ENCODE measurements at regions of chr2 and their contacts with region 1.

Region 1: GRCh38 chr2:20097879-20098714 is 46.7 kb upstream of the LAPTM4A start:
- DNase-seq: peak; percentile 88
- ATAC-seq: peak; percentile 97
- H3K4me3 Mint-ChIP-seq: no peak overlapping the region
- H3K27ac Mint-ChIP-seq: no peak overlapping the region
- H3K4me1 Mint-ChIP-seq: no peaks in the 10 kb centered on the region
- H3K27me3 Mint-ChIP-seq: peaks cover 15% of the 10 kb centered on the region

Region 2: DNA sequence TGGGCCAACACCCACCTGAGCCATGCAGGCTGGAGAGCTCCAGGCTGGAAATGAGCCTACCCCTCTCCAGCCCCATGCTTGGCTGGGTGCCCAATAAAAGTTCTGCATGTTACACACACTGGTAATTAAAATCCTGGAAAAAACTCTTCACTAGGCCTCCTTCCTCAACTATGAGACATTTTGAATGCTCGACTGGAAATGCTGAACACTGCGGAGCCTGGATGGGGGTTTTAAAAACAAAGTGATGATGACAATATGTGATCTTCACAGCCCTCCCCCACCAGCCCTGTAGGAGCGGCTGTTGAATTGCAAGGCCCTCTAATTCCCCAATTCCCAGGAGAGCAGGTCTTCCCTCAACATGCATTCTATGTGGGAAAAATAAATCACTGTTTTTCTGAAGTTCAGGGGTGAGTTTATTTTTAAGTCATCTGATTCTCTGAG is 375.5 kb before region 1 on chr2:
- CTCF ChIA-PET with region 1: no interaction called
- POLR2A ChIA-PET with region 1: no interaction called
- intact Hi-C with region 1: no loop called
- DNase-seq: no peak
- ATAC-seq: no peak
- H3K4me3 Mint-ChIP-seq: no peak overlapping the region
- H3K27ac Mint-ChIP-seq: no peak overlapping the region
- H3K4me1 Mint-ChIP-seq: no peaks in the 10 kb centered on the region
- H3K27me3 Mint-ChIP-seq: no peaks in the 10 kb centered on the region

Region 3: GRCh38 chr2:19955544-19956422 is 142.3 kb before region 1 on chr2:
- CTCF ChIA-PET with region 1: interaction called, 10 read pairs
- POLR2A ChIA-PET with region 1: no interaction called
- intact Hi-C with region 1: loop called (anchors 1 kb)
- DNase-seq: peak; percentile 67
- ATAC-seq: peak; percentile 87
- H3K4me3 Mint-ChIP-seq: no peak overlapping the region
- H3K27ac Mint-ChIP-seq: no peak overlapping the region
- H3K4me1 Mint-ChIP-seq: no peaks in the 10 kb centered on the region
- H3K27me3 Mint-ChIP-seq: no peaks in the 10 kb centered on the region

Region 4: GRCh38 chr2:19989681-19990415 is 108.2 kb before region 1 on chr2 and contains the start of gene WDR35:
- CTCF ChIA-PET with region 1: interaction called, 3 read pairs
- POLR2A ChIA-PET with region 1: no interaction called
- intact Hi-C with region 1: loop called in 1 of 2 experiments (anchors 1 kb)
- DNase-seq: peak; percentile 95
- ATAC-seq: peak; percentile 97
- H3K4me3 Mint-ChIP-seq: peak within 1 kb of the TSS; percentile 90
- H3K27ac Mint-ChIP-seq: peak within 1 kb of the TSS; percentile 75
- H3K4me1 Mint-ChIP-seq: peaks cover 28% of the 10 kb centered on the region
- H3K27me3 Mint-ChIP-seq: peaks cover 12% of the 10 kb centered on the region
- total RNA-seq, gene WDR35: 6.2 to 7.4 TPM

Region 5: DNA sequence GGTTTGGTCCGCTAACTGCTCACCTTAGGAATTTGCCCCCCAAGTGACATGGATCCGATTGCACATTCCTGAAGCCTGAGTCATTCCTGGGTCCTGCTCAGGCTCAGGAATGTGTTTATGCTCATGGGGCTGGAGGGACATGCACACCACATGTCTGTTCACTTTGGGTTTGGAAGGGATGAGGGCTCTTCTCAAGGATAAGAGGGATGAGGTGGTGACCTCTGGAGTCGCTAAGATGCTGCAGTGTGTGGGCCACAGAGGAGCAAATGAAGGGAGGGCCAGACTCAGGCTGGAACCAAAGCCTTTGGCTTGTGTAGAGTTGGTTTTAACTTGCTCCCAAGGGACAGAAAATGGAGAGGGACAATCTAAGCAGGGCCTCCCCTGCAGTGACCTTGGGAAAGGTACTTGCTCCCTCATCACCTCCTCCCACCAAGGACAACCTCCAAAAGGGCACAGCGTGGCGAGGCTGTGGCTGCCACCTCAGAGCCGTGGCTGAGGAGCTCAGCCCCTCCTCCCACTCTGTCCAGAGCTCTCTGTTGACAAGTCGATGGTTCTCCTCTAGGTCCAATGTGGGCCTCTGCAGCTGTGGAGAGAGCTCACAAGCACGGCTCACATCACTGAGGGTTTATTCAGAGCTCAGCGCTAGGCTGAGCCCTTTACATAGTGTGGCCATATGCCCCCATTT is 486.7 kb after region 1 on chr2:
- CTCF ChIA-PET with region 1: no interaction called
- POLR2A ChIA-PET with region 1: no interaction called
- intact Hi-C with region 1: no loop called
- DNase-seq: no peak
- ATAC-seq: no peak
- H3K4me3 Mint-ChIP-seq: no peak overlapping the region
- H3K27ac Mint-ChIP-seq: no peak overlapping the region
- H3K4me1 Mint-ChIP-seq: peaks cover 3% of the 10 kb centered on the region
- H3K27me3 Mint-ChIP-seq: peaks cover 2% of the 10 kb centered on the region

Measured in activated CD4-positive, alpha-beta T cell treated with anti-CD3 and anti-CD28 coated beads for 36 hours (primary cell).